CD4-positive, alpha-beta memory T cell (primary cell): ENCODE measurements at regions of chr19 and their contacts with region 1.

Region 1: GRCh38 chr19:48255376-48256303 is at the start of gene CARD8:
- DNase-seq: peak; percentile 83 to 92 (median 87)
- H3K4me3 ChIP-seq: peak within 1 kb of the TSS; percentile 77 to 86
- H3K4me3 Mint-ChIP-seq: peak within 1 kb of the TSS; percentile 92 to 99 (median 99)
- H3K27ac ChIP-seq: peak within 1 kb of the TSS; percentile 90
- H3K27ac Mint-ChIP-seq: peak within 1 kb of the TSS; percentile 93 to 100 (median 98)
- H3K4me1 ChIP-seq: peaks cover 75% of the 10 kb centered on the region
- H3K4me1 Mint-ChIP-seq: peaks cover 47 to 83% (median 61%) of the 10 kb centered on the region in 4 donors
- H3K27me3 ChIP-seq: no peaks in the 10 kb centered on the region
- H3K27me3 Mint-ChIP-seq: no peaks in the 10 kb centered on the region
- total RNA-seq, gene CARD8: 310 to 316 TPM

Region 2: DNA sequence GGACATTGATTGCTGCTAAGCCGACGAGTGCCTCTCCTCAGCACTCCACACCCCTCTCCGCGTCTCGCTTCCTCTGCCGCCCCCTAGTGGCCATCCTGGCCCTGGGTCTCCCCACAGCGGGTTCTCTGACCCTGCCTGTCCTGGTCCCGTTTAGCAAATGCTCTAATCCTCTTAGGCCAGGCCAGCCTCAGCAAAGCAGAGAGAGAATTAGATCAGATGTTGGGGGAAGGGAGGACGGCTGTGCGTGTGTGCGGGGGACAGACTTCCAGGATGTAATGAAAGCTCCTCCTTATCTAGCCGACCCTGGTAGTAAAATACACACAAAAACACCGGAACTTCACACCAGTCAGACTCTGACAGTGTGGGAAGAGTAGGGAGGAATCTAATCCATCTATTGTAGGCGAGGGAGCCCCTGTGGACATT is 392.1 kb before region 1 on chr19:
- CTCF ChIA-PET with region 1: no interaction called
- POLR2A ChIA-PET with region 1: no interaction called
- intact Hi-C with region 1: no loop called
- DNase-seq: peak; percentile 62 to 71 (median 68)
- H3K4me3 ChIP-seq: no peak overlapping the region
- H3K4me3 Mint-ChIP-seq: no peak overlapping the region
- H3K27ac ChIP-seq: no peak overlapping the region
- H3K27ac Mint-ChIP-seq: no peak overlapping the region
- H3K4me1 ChIP-seq: no peaks in the 10 kb centered on the region
- H3K4me1 Mint-ChIP-seq: peaks cover 0 to 5% (median 0%) of the 10 kb centered on the region in 4 donors
- H3K27me3 ChIP-seq: no peaks in the 10 kb centered on the region
- H3K27me3 Mint-ChIP-seq: peaks cover 6 to 14% of the 10 kb centered on the region in 2 donors

Region 3: DNA sequence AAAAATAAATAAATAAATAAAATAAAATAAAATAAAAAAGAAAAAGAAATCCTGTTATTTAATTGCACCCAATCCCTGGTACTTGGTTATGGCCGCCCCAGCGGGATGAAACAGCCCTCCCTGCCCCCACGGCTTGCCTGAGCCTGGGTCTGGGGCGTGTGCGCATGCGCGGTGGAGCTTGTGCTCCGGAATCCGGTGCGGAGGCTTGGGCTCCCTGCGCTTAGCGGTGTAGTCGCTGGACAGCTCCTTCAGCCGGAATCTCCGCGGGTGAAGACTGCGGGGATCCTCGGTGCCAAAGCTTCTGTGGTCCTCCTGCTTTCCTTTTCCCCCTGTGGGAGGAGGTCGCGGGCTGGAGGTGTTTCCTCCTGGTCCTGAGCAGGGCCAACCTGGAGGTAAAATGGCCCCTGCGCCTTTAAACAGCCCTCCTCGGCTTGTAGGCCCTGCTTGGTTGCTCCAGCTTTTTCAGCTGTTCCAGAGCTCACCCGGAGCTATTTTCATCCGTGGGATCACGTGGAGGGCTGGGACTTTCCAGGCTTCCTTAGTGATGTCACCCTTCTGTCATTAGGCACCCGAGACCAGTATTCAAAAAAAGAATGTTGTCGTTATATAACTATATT is 145.2 kb before region 1 on chr19 and contains the start of gene PLA2G4C:
- CTCF ChIA-PET with region 1: interaction called, 39 read pairs
- POLR2A ChIA-PET with region 1: interaction called, 4 read pairs
- intact Hi-C with region 1: loop called (anchors 1 kb)
- DNase-seq: peak; percentile 79 to 82 (median 80)
- H3K4me3 ChIP-seq: peak within 1 kb of the TSS; percentile 34 to 56
- H3K4me3 Mint-ChIP-seq: peak within 1 kb of the TSS; percentile 74 to 94 (median 84)
- H3K27ac ChIP-seq: peak within 1 kb of the TSS; percentile 58
- H3K27ac Mint-ChIP-seq: peak within 1 kb of the TSS; percentile 57 to 93 (median 81)
- H3K4me1 ChIP-seq: peaks cover 10% of the 10 kb centered on the region
- H3K4me1 Mint-ChIP-seq: peaks cover 2 to 17% (median 11%) of the 10 kb centered on the region in 4 donors
- H3K27me3 ChIP-seq: no peaks in the 10 kb centered on the region
- H3K27me3 Mint-ChIP-seq: peaks cover 0 to 2% of the 10 kb centered on the region in 2 donors
- total RNA-seq, gene PLA2G4C: 10.7 to 11.1 TPM

Region 4: GRCh38 chr19:48152551-48152950 is 103.1 kb before region 1 on chr19:
- CTCF ChIA-PET with region 1: interaction called, 7 read pairs
- POLR2A ChIA-PET with region 1: no interaction called
- intact Hi-C with region 1: loop called (anchors 1 kb)
- DNase-seq: peak in 4 of 5 donors; percentile 44 to 63 (median 52)
- H3K4me3 ChIP-seq: no peak overlapping the region
- H3K4me3 Mint-ChIP-seq: no peak overlapping the region
- H3K27ac ChIP-seq: no peak overlapping the region
- H3K27ac Mint-ChIP-seq: peak overlapping the region in 1 of 7 donors; percentile 43
- H3K4me1 ChIP-seq: no peaks in the 10 kb centered on the region
- H3K4me1 Mint-ChIP-seq: peaks cover 0 to 3% (median 1%) of the 10 kb centered on the region in 4 donors
- H3K27me3 ChIP-seq: no peaks in the 10 kb centered on the region
- H3K27me3 Mint-ChIP-seq: no peaks in the 10 kb centered on the region

Region 5: GRCh38 chr19:48170038-48170812 is 85.4 kb before region 1 on chr19 and contains the starts of genes LIG1 and ZSWIM9:
- CTCF ChIA-PET with region 1: interaction called, 3 read pairs
- POLR2A ChIA-PET with region 1: interaction called, 9 read pairs
- intact Hi-C with region 1: loop called (anchors 1 kb)
- DNase-seq: peak; percentile 90 to 97 (median 93)
- H3K4me3 ChIP-seq: peak within 1 kb of the TSS; percentile 65 to 97
- H3K4me3 Mint-ChIP-seq: peak within 1 kb of the TSS; percentile 96 to 99 (median 97)
- H3K27ac ChIP-seq: peak within 1 kb of the TSS; percentile 86
- H3K27ac Mint-ChIP-seq: peak within 1 kb of the TSS; percentile 93 to 99 (median 98)
- H3K4me1 ChIP-seq: peaks cover 24% of the 10 kb centered on the region
- H3K4me1 Mint-ChIP-seq: peaks cover 18 to 32% (median 23%) of the 10 kb centered on the region in 4 donors
- H3K27me3 ChIP-seq: no peaks in the 10 kb centered on the region
- H3K27me3 Mint-ChIP-seq: no peaks in the 10 kb centered on the region
- total RNA-seq, gene LIG1: 118 to 124 TPM
- total RNA-seq, gene ZSWIM9: 10.5 to 11.8 TPM

Region 6: GRCh38 chr19:48190288-48190884 is 65.3 kb before region 1 on chr19:
- CTCF ChIA-PET with region 1: interaction called, 3 read pairs
- POLR2A ChIA-PET with region 1: no interaction called
- intact Hi-C with region 1: loop called (anchors 1 kb)
- DNase-seq: peak; percentile 36 to 77 (median 54)
- H3K4me3 ChIP-seq: no peak overlapping the region
- H3K4me3 Mint-ChIP-seq: no peak overlapping the region
- H3K27ac ChIP-seq: no peak overlapping the region
- H3K27ac Mint-ChIP-seq: peak overlapping the region in 3 of 7 donors; percentile 3 to 63 (median 29)
- H3K4me1 ChIP-seq: no peaks in the 10 kb centered on the region
- H3K4me1 Mint-ChIP-seq: peaks cover 2 to 21% (median 4%) of the 10 kb centered on the region in 4 donors
- H3K27me3 ChIP-seq: no peaks in the 10 kb centered on the region
- H3K27me3 Mint-ChIP-seq: no peaks in the 10 kb centered on the region

Region 7: GRCh38 chr19:48244281-48244680 is 11.4 kb before region 1 on chr19:
- CTCF ChIA-PET with region 1: interaction called, 16 read pairs
- POLR2A ChIA-PET with region 1: interaction called, 61 read pairs
- intact Hi-C with region 1: loop called (anchors 1 kb)
- DNase-seq: peak; percentile 45 to 62 (median 47)
- H3K4me3 ChIP-seq: peak overlapping the region in 1 of 2 donors; percentile 38
- H3K4me3 Mint-ChIP-seq: peak overlapping the region; percentile 63 to 82 (median 78)
- H3K27ac ChIP-seq: peak overlapping the region; percentile 62
- H3K27ac Mint-ChIP-seq: peak overlapping the region; percentile 83 to 92 (median 89)
- H3K4me1 ChIP-seq: peaks cover 52% of the 10 kb centered on the region
- H3K4me1 Mint-ChIP-seq: peaks cover 32 to 64% (median 49%) of the 10 kb centered on the region in 4 donors
- H3K27me3 ChIP-seq: no peaks in the 10 kb centered on the region
- H3K27me3 Mint-ChIP-seq: no peaks in the 10 kb centered on the region